Activated CD8-positive, alpha-beta T cell treated with anti-CD3 and anti-CD28 coated beads for 36 hours (primary cell): ENCODE measurements at regions of chr9 and their contacts with region 1.

Region 1: GRCh38 chr9:93566408-93567270 is 9.7 kb upstream of the PHF2 start:
- DNase-seq: peak; percentile 98
- ATAC-seq: peak; percentile 99
- H3K4me3 Mint-ChIP-seq: peak overlapping the region; percentile 89
- H3K27ac Mint-ChIP-seq: peak overlapping the region; percentile 96
- H3K4me1 Mint-ChIP-seq: peaks cover 22% of the 10 kb centered on the region
- H3K27me3 Mint-ChIP-seq: no peaks in the 10 kb centered on the region
- CTCF ChIP-seq: peak; percentile 86

Region 2: GRCh38 chr9:93262537-93263242 is 303.9 kb before region 1 on chr9:
- CTCF ChIA-PET with region 1: no interaction called
- POLR2A ChIA-PET with region 1: no interaction called
- intact Hi-C with region 1: no loop called
- DNase-seq: no peak
- ATAC-seq: no peak
- H3K4me3 Mint-ChIP-seq: no peak overlapping the region
- H3K27ac Mint-ChIP-seq: no peak overlapping the region
- H3K4me1 Mint-ChIP-seq: peaks cover 2% of the 10 kb centered on the region
- H3K27me3 Mint-ChIP-seq: peaks cover 2% of the 10 kb centered on the region
- CTCF ChIP-seq: no peak

Region 3: DNA sequence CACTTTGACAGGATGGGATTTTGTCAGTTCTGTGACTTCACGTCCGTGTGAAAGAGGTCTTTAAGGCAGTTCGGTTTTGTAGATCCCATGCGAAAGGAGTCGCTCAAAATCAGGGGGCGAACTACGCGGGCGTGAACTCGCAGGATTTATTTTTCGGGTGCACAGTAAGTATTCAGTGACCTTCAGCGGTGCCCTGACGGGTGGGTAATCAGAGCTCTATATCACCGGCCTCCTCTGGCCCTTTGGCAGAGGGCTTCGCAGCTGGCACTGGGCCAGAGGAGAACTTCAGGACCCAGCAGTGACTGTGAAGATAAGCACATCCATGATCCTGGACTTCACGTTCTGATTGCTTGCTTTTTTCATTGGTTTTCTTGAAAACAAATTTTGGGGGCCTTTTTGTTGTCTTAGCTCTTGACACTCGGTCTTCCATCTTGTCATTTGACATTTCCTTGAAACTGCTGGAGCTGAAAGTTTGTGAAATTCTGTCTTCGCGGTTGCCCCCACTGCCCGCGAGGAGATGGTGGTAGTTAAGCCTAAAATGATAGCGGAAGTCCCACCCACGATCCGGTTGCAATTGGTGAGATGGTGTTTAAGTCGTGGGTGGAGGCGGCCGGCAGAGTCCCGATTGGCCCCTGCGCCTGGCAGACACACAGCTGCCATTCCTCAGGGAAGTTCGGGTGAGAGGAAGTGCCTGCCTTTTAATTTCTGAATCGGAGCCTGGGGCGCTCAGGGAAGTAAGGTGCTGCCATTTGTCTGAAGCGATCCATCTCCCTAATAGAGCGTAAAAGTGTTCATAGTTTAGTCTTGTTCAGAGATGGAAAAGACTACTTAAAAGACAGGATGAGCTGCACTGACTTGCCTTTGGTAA is 113.4 kb before region 1 on chr9 and contains the start of gene FAM120AOS:
- CTCF ChIA-PET with region 1: interaction called, 18 read pairs
- POLR2A ChIA-PET with region 1: interaction called, 10 read pairs
- intact Hi-C with region 1: loop called (anchors 10 kb)
- DNase-seq: peak; percentile 95
- ATAC-seq: peak; percentile 62
- H3K4me3 Mint-ChIP-seq: peak within 1 kb of the TSS; percentile 78
- H3K27ac Mint-ChIP-seq: peak within 1 kb of the TSS; percentile 86
- H3K4me1 Mint-ChIP-seq: peaks cover 48% of the 10 kb centered on the region
- H3K27me3 Mint-ChIP-seq: no peaks in the 10 kb centered on the region
- CTCF ChIP-seq: no peak
- total RNA-seq, gene FAM120AOS: 32.8 to 36.4 TPM

Region 4: DNA sequence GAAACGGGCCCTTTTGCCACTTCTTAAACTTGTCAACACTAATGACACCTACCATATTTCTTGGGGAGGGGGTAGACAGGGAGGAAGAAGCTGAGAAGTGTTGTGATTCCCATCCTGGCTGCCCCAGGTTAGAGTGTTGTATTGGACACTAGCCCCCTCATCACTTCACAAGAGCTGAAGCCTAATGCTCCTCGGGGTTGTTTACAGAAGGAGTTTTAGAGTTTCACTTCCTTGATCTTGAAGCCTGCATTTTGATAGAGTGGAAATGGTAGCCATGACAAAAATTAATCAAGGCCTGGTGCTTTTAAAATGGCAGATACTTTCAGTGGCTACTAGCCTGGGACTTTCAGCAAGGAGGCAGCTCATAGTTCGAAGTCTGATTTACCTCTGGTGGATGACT is 102.2 kb before region 1 on chr9:
- CTCF ChIA-PET with region 1: interaction called, 12 read pairs
- POLR2A ChIA-PET with region 1: no interaction called
- intact Hi-C with region 1: loop called (anchors 10 kb)
- DNase-seq: no peak
- ATAC-seq: no peak
- H3K4me3 Mint-ChIP-seq: peak overlapping the region; percentile 42
- H3K27ac Mint-ChIP-seq: peak overlapping the region; percentile 90
- H3K4me1 Mint-ChIP-seq: peaks cover 85% of the 10 kb centered on the region
- H3K27me3 Mint-ChIP-seq: no peaks in the 10 kb centered on the region
- CTCF ChIP-seq: no peak

Region 5: DNA sequence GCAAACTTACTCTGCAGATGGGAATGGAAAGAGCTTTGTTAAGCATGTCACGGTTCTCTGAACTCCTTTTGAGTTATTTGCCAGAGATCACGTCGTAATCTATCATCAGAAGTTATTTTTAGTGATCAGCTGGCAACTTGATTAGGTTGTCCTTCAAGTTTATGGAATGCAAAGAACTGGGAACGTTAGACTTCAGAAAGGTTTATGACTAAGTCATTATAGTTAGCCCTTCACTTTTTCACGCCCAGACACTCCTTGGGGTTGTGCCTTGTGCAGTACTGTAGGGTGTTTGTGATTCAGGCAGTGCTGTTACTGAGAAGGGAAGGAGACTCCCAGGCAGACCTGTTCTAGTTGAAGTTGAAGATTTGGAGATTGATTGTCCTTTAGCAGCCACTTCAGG is 17.0 kb before region 1 on chr9:
- CTCF ChIA-PET with region 1: interaction called, 58 read pairs
- POLR2A ChIA-PET with region 1: no interaction called
- intact Hi-C with region 1: no loop called
- DNase-seq: no peak
- ATAC-seq: no peak
- H3K4me3 Mint-ChIP-seq: no peak overlapping the region
- H3K27ac Mint-ChIP-seq: no peak overlapping the region
- H3K4me1 Mint-ChIP-seq: no peaks in the 10 kb centered on the region
- H3K27me3 Mint-ChIP-seq: no peaks in the 10 kb centered on the region
- CTCF ChIP-seq: no peak

Region 6: GRCh38 chr9:93577076-93577974 is 10.7 kb after region 1 on chr9:
- CTCF ChIA-PET with region 1: interaction called, 23 read pairs
- POLR2A ChIA-PET with region 1: interaction called, 6 read pairs
- intact Hi-C with region 1: no loop called
- DNase-seq: no peak
- ATAC-seq: peak; percentile 17
- H3K4me3 Mint-ChIP-seq: peak overlapping the region; percentile 80
- H3K27ac Mint-ChIP-seq: peak overlapping the region; percentile 86
- H3K4me1 Mint-ChIP-seq: peaks cover 34% of the 10 kb centered on the region
- H3K27me3 Mint-ChIP-seq: no peaks in the 10 kb centered on the region
- CTCF ChIP-seq: no peak